Mammary epithelial cell (primary cell): ENCODE measurements at regions of chr10 and their contacts with region 1.

Region 1: GRCh38 chr10:110746254-110746826 is 102.2 kb downstream of the RBM20 start:
- DNase-seq: peak; percentile 71
- H3K4me3 ChIP-seq: peak overlapping the region in 1 of 3 experiments; percentile 8
- H3K27ac ChIP-seq: no peak overlapping the region
- H3K4me1 ChIP-seq: peaks cover 8% of the 10 kb centered on the region
- H3K27me3 ChIP-seq: no peaks in the 10 kb centered on the region
- CTCF ChIP-seq: peak; percentile 80 to 85

Region 2: DNA sequence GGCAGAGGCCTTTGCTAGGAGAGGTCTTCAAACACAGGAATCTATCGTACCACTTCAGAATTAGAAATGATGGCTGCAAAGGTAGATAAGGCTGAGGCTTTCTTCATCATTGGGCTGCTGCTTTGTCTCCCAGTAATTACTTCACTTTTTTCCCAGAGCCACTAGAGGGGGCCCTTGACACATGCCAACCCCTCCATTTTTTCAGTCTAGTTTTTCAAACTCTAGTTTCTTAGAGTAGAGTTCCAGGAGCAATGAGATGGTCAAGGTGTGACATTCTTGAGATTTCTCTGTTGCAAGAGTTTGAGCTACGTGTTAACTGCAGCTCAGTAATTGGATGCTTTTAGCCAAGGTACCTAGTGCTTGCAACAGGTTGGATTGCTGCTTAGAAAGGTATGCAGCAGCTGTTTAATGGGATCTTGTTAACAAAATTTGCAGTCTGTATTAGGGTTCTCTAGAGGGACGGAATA is 136.0 kb before region 1 on chr10:
- CTCF ChIA-PET with region 1: no interaction called
- dilution Hi-C with region 1: no loop called
- in situ Hi-C with region 1: loop called in 1 of 2 experiments (anchors 25 kb)
- intact Hi-C with region 1: loop called (anchors 1 kb)
- DNase-seq: peak; percentile 46
- H3K4me3 ChIP-seq: no peak overlapping the region
- H3K27ac ChIP-seq: no peak overlapping the region
- H3K4me1 ChIP-seq: peaks cover 9% of the 10 kb centered on the region
- H3K27me3 ChIP-seq: no peaks in the 10 kb centered on the region
- CTCF ChIP-seq: peak; percentile 89 to 90

Region 3: DNA sequence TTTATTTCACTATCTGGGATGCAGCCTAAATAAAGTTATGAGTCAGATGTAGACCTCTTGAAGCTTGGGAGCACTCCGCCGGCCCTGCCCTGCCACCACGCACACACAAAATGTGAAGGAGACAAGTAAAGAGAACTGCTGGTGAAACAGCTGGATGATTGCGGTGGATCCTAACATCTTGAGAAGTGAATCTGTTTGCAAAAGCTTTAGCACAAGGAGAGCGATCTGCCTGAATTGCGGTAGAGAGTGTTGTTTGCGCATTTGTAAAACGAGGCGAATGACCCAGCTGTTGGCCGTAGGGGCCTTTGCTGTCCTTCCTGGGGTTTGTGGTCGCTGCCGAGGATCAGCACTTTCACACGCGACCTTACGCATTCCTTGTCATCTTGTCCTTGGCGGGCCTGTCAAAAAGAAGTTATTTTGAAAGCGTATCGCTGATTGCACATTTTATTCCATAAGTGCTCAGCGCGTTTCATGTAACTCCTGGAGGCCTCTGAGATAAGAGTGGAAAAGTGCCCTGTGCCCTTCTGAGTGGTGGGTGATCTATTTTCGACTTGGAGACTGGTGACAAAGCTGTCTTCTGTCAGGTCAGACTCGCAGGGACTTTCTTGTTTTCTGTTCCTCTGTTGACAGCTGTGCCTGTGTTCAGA is 61.4 kb before region 1 on chr10:
- CTCF ChIA-PET with region 1: no interaction called
- dilution Hi-C with region 1: no loop called
- in situ Hi-C with region 1: no loop called
- intact Hi-C with region 1: no loop called
- DNase-seq: no peak
- H3K4me3 ChIP-seq: no peak overlapping the region
- H3K27ac ChIP-seq: no peak overlapping the region
- H3K4me1 ChIP-seq: peaks cover 8% of the 10 kb centered on the region
- H3K27me3 ChIP-seq: no peaks in the 10 kb centered on the region
- CTCF ChIP-seq: no peak

Region 4: DNA sequence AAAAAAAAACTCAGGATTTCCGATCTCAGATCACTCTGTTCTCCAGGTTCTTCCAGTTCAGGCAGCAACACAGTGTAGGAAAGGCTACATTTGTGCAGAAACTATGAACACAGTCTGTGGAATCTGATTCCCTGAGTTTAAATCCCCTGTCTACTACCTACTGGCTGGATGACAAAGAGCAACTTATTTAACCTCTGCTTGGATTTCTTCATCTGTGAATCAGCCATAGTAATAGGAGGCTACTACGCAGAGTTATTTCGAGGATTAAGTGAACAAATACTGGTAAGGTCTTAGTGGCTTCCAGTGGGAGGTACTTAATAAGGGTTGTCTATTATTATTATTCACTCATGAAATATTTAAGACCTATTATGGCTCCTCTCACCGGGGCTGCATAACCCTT is 81.1 kb after region 1 on chr10:
- CTCF ChIA-PET with region 1: no interaction called
- dilution Hi-C with region 1: no loop called
- in situ Hi-C with region 1: no loop called
- intact Hi-C with region 1: loop called (anchors 5 kb)
- DNase-seq: peak; percentile 64
- H3K4me3 ChIP-seq: no peak overlapping the region
- H3K27ac ChIP-seq: no peak overlapping the region
- H3K4me1 ChIP-seq: peaks cover 8% of the 10 kb centered on the region
- H3K27me3 ChIP-seq: no peaks in the 10 kb centered on the region
- CTCF ChIP-seq: no peak

Region 5: GRCh38 chr10:110852255-110852896 is 106.0 kb after region 1 on chr10:
- CTCF ChIA-PET with region 1: no interaction called
- dilution Hi-C with region 1: no loop called
- in situ Hi-C with region 1: no loop called
- intact Hi-C with region 1: no loop called
- DNase-seq: peak; percentile 99
- H3K4me3 ChIP-seq: no peak overlapping the region
- H3K27ac ChIP-seq: peak overlapping the region; percentile 84
- H3K4me1 ChIP-seq: peaks cover 39% of the 10 kb centered on the region
- H3K27me3 ChIP-seq: no peaks in the 10 kb centered on the region
- CTCF ChIP-seq: no peak

Region 6: DNA sequence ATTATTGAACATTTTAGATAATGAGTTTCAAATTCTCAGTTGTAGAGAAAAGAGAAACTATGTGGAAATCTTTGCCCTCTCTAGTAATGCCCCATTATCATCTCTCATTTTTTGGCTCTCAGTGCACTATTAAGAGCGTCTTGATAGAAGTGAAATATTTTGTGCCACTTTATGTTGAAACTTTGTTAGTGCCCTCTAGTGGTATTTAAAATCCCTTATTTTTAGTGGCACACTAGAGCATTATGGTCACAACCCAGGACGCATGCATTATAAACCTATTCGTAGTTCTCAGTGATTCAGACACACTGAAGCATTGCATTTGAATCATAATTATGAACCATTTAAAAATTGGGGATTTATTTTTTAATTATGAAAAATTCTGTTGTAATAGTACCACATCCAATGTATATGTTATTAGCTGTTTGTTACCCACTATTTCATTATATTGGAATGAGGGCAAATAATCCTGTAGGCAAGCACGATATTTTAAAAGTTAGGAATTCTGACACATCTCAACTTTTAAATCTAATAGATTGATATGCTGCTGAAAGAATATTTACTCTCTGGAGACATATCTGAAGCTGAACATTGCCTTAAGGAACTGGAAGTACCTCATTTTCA is 147.3 kb after region 1 on chr10:
- CTCF ChIA-PET with region 1: no interaction called
- dilution Hi-C with region 1: no loop called
- in situ Hi-C with region 1: loop called in 1 of 2 experiments (anchors 10 kb)
- intact Hi-C with region 1: loop called (anchors 1 kb)
- DNase-seq: peak; percentile 28
- H3K4me3 ChIP-seq: no peak overlapping the region
- H3K27ac ChIP-seq: no peak overlapping the region
- H3K4me1 ChIP-seq: peaks cover 3% of the 10 kb centered on the region
- H3K27me3 ChIP-seq: no peaks in the 10 kb centered on the region
- CTCF ChIP-seq: peak; percentile 43 to 52

Region 7: DNA sequence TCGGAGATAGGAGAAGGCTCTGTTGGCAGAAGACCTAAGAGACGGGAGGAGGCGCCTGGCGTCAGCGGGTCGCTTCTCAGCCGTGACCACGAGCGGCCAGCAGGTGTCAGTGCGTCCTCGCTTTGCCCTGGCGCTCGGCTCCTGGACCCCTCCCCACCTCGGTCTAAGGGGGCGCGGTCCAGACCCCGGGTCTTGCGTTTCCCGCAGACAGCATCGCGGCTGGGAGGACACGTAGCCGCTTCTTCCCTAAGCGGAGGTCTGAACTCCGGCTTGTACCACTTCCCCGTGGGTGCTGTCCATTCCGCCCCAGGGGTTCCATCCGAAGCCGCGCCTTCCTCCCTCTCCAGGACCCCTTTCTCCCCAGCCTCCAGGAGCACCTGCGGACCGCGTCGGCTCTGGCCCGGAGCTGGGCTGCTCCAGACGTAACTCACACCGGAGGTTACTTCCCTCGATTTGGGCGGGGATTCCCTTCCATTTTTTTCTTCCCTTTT is 329.9 kb after region 1 on chr10:
- CTCF ChIA-PET with region 1: no interaction called
- dilution Hi-C with region 1: no loop called
- in situ Hi-C with region 1: no loop called
- intact Hi-C with region 1: loop called (anchors 5 kb)
- DNase-seq: peak; percentile 37
- H3K4me3 ChIP-seq: peak overlapping the region; percentile 45 to 56 (median 46)
- H3K27ac ChIP-seq: no peak overlapping the region
- H3K4me1 ChIP-seq: peaks cover 21% of the 10 kb centered on the region
- H3K27me3 ChIP-seq: peaks cover 32% of the 10 kb centered on the region
- CTCF ChIP-seq: peak; percentile 55 to 86

Region 8: GRCh38 chr10:111598436-111599059 is 852.2 kb after region 1 on chr10:
- CTCF ChIA-PET with region 1: no interaction called
- dilution Hi-C with region 1: no loop called
- in situ Hi-C with region 1: no loop called
- intact Hi-C with region 1: loop called (anchors 5 kb)
- DNase-seq: peak; percentile 38
- H3K4me3 ChIP-seq: no peak overlapping the region
- H3K27ac ChIP-seq: no peak overlapping the region
- H3K4me1 ChIP-seq: no peaks in the 10 kb centered on the region
- H3K27me3 ChIP-seq: no peaks in the 10 kb centered on the region
- CTCF ChIP-seq: peak; percentile 88 to 96